ENCODE measurements at regions of chr11 and their contacts with region 1.

Region 1: DNA sequence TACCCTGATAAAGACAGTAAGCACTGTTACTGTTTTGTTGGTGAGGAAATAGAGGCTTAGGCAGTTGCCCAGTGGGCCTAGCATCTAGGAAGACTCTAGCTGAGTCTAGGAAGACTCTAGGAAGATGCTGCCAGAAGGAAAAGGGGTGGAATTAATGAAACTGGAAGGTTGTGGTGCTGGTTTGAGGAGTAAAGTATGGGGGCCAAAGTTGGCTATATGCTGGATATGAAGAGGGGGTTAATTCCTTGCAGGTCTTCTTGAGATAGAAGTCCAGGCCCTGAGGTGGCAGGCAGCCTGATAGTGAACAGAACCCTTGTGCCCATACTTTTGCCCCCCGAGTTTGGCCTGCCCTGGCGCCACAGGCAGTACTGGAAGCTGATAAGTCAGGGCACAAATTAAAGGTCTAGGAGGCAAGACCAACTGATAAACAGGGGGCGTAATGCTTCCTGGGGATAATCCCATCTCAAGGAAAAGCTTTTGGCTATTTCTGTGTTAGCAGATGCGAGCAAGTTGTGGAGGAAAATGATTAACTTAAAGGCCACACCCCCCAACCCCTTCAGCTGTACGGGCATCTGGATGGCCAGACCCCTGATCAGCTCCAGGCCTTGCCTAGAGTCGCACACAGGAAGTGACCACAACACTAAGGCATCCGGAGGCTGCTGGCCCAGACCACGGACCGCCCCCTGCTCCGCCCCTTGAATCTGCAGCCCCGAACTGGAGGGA is 3.1 kb downstream of the ILK start:
- DNase-seq: peak; percentile 91
- ATAC-seq: peak; percentile 73
- H3K4me3 ChIP-seq: peak overlapping the region; percentile 60
- H3K27ac ChIP-seq: peak overlapping the region; percentile 81
- H3K4me1 ChIP-seq: peaks cover 53% of the 10 kb centered on the region
- H3K27me3 ChIP-seq: no peaks in the 10 kb centered on the region
- CTCF ChIP-seq: no peak

Region 2: GRCh38 chr11:6682936-6683861 is 76.6 kb after region 1 on chr11 and contains the start of gene MRPL17:
- intact Hi-C with region 1: loop called (anchors 5 kb)
- DNase-seq: peak; percentile 99
- ATAC-seq: peak; percentile 99
- H3K4me3 ChIP-seq: peak within 1 kb of the TSS; percentile 96
- H3K27ac ChIP-seq: peak within 1 kb of the TSS; percentile 88
- H3K4me1 ChIP-seq: peaks cover 12% of the 10 kb centered on the region
- H3K27me3 ChIP-seq: no peaks in the 10 kb centered on the region
- CTCF ChIP-seq: peak; percentile 93
- total RNA-seq, gene MRPL17: 35.1 TPM

Region 3: DNA sequence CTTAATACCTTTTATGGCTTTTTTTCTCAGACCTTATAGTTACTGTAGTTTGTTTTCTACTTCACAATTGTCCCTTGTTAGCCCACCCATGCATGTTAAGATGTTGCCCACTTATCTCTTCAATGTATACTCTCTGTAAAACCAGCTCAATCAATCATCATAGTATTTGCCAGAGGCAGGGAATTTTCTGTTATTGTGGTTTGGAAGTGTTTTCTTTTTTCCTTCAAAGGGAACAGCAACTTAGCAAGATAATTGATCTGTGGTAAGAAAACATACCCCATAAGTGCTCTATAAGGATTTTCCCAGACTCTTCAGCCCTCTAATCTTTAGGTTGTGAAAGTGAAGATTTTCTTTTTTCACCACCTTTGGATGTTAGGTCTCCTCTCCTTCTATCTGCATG is 568.4 kb after region 1 on chr11:
- intact Hi-C with region 1: no loop called
- DNase-seq: no peak
- ATAC-seq: no peak
- H3K4me3 ChIP-seq: no peak overlapping the region
- H3K27ac ChIP-seq: no peak overlapping the region
- H3K4me1 ChIP-seq: no peaks in the 10 kb centered on the region
- H3K27me3 ChIP-seq: no peaks in the 10 kb centered on the region
- CTCF ChIP-seq: no peak